Heart right ventricle (tissue), 16 donors: ENCODE measurements at regions of chr20 and their contacts with region 1.

Region 1: DNA sequence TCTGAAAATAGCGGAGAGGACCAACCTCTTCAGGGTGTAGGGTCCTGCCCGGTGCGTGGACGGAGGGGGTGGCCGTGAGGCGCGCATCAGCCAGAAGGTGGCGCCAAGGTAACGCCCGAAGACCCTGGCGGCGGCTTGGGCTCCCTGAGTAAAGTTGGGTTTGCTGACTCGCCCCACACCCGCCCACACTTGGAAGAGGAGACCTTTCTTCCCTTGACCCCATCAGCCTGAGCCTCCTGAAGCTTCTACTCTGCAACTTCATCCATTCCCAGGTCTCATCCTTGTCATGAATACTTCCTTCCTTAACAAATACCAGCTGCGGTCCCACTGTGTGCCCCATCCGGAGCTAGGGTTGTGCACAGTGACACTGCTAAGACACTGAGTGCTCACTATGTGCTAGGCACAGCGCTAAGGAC is 14.6 kb downstream of the CD40 start:
- DNase-seq: peak; percentile 72 to 76
- ATAC-seq: peak; percentile 82 to 91 (median 88)
- H3K4me3 ChIP-seq: no peak overlapping the region
- H3K27ac ChIP-seq: no peak overlapping the region
- H3K4me1 ChIP-seq: peaks cover 0 to 31% (median 24%) of the 10 kb centered on the region in 9 donors
- H3K27me3 ChIP-seq: peaks cover 0 to 56% (median 24%) of the 10 kb centered on the region in 7 donors
- CTCF ChIP-seq: peak; percentile 72 to 93 (median 87)

Region 2: DNA sequence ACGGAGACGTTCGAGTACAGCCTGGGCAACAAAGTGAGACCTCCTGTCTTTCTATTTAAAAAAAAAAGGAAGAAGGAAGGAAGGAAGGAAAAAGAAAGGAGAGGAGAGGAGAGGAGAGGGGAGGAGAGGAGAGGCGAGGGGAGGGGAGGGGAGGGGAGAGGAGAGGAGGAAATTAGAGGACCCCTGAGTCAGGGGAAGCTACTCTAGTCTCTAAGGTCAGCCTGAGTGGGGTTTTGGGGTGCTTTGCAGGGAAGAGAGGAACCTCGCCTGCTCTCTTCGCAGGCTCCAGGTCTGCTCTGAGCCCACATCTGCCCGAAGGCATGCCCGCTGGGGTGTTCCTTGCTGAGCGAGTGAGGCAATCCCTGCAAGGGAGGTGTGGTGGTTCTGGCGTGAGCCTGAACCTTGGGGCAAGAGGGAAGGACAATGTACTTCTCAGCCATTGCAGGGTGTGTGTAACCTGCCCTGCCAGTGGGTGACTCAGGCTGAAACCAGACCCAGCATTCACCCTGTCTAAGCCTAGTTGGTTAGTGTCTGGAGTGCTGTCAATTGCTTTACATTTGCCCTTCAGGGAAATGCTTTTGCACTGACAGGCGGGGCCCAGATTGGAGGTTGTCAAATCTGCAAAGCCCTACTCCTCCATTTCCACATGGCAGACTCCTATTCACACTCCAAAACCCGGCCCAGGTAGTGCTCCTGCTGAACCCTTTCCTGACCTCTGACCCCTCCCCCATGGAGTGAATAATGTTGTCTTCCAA is 139.3 kb before region 1 on chr20:
- intact Hi-C with region 1: no loop called
- DNase-seq: no peak
- ATAC-seq: peak in 1 of 8 donors; percentile 38
- H3K4me3 ChIP-seq: no peak overlapping the region
- H3K27ac ChIP-seq: no peak overlapping the region
- H3K4me1 ChIP-seq: peaks cover 0 to 21% (median 0%) of the 10 kb centered on the region in 9 donors
- H3K27me3 ChIP-seq: peaks cover 6 to 84% (median 60%) of the 10 kb centered on the region in 7 donors
- CTCF ChIP-seq: no peak

Region 3: GRCh38 chr20:46174469-46175128 is 41.9 kb after region 1 on chr20:
- intact Hi-C with region 1: loop called in 4 of 10 experiments (anchors 1 to 5 kb)
- DNase-seq: peak; percentile 64 to 77
- ATAC-seq: peak; percentile 56 to 82 (median 76)
- H3K4me3 ChIP-seq: no peak overlapping the region
- H3K27ac ChIP-seq: no peak overlapping the region
- H3K4me1 ChIP-seq: peaks cover 0 to 12% (median 0%) of the 10 kb centered on the region in 9 donors
- H3K27me3 ChIP-seq: peaks cover 12 to 75% (median 61%) of the 10 kb centered on the region in 7 donors
- CTCF ChIP-seq: peak; percentile 37 to 75 (median 63)

Region 4: GRCh38 chr20:46307139-46307998 is 174.7 kb after region 1 on chr20:
- intact Hi-C with region 1: loop called in 3 of 10 experiments (anchors 2 to 5 kb)
- DNase-seq: peak in 1 of 2 donors; percentile 47
- ATAC-seq: peak; percentile 21 to 76 (median 55)
- H3K4me3 ChIP-seq: peak overlapping the region in 9 of 10 donors; percentile 31 to 53 (median 47)
- H3K27ac ChIP-seq: no peak overlapping the region
- H3K4me1 ChIP-seq: peaks cover 3 to 19% (median 10%) of the 10 kb centered on the region in 9 donors
- H3K27me3 ChIP-seq: peaks cover 28 to 98% (median 93%) of the 10 kb centered on the region in 7 donors
- CTCF ChIP-seq: peak; percentile 43 to 86 (median 70)

Region 5: GRCh38 chr20:46324960-46325703 is 192.4 kb after region 1 on chr20:
- intact Hi-C with region 1: loop called in 1 of 10 experiments (anchors 5 kb)
- DNase-seq: no peak
- ATAC-seq: peak in 1 of 8 donors; percentile 17
- H3K4me3 ChIP-seq: no peak overlapping the region
- H3K27ac ChIP-seq: no peak overlapping the region
- H3K4me1 ChIP-seq: peaks cover 0 to 2% (median 0%) of the 10 kb centered on the region in 9 donors
- H3K27me3 ChIP-seq: peaks cover 6 to 94% (median 83%) of the 10 kb centered on the region in 7 donors
- CTCF ChIP-seq: peak in 6 of 9 donors; percentile 17 to 47 (median 32)

Region 6: DNA sequence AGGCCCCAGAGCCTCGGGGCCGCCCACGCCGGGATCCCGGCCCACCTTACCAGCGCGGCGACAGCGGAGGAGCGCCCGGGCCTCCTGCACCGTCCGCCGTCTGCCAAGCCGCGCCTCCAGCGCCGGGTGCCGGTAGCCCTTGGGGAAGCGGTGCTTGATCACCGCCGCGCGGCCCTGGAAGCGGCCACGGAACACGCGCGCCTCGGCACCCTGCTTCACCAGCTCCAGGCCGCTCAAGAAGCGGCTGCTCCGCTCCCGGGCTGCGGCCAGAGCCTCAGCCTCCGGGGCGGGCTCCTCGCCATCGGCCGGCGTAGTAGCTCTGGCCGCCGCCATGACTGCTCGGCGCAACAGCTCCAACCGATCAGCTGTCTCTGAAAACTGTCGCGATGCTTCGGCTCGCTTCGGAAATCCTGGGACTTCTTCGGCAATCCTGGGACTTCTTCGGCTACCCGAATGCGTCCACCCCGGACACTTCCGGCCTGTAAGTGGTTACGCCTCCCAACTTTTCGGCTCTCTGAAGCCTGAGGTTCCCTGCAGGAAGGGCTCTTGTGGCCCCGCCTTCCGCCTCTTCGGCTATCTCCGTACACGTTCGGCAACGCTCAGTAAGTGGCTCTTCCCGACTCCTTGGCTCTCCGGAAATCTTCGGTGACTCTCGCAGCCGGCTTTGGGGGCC is 556.5 kb after region 1 on chr20 and contains the start of gene TP53RK:
- intact Hi-C with region 1: loop called in 1 of 10 experiments (anchors 10 kb)
- DNase-seq: peak; percentile 98 to 99
- ATAC-seq: peak; percentile 97 to 99 (median 98)
- H3K4me3 ChIP-seq: peak within 1 kb of the TSS; percentile 65 to 95 (median 83)
- H3K27ac ChIP-seq: peak within 1 kb of the TSS; percentile 81 to 99 (median 94)
- H3K4me1 ChIP-seq: peaks cover 3 to 47% (median 28%) of the 10 kb centered on the region in 9 donors
- H3K27me3 ChIP-seq: no peaks in the 10 kb centered on the region
- CTCF ChIP-seq: peak in 7 of 9 donors; percentile 14 to 53 (median 41)
- total RNA-seq, gene TP53RK: 3.5 to 7.3 (median 6.4) TPM